Caco-2 (cell line): ENCODE measurements at regions of chrX and their contacts with region 1.

Region 1: DNA sequence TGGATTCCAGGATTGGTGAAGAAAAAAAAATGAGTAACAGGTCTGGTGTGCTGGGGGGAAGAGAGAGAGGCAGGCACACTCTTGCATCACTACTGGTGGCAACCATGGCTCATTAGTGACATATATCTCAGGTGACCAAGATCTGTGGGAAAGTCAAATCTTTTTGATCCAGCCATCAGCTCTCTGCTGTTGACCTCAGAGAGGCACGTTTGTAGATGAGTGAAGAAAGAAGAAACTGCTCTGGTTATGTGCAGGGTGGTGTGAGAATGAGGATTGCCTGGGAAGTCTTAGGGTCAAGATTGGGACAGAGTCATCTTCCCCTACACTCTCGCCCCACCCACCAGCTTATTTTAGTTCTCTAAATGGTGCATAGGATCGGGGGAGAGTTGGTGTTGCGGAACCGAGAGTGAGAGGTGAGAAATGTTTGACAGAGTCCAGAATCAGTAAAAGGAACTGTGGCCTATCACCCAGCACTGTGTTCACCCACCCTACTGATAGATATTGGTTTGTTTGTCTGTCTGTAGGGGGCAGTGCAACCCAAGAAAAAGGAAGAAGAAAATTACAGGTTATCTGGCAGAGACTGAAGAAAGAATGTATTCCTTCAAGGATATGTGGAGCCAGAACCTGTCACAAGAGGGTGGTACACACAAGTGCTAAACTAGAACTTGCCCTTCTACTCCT is 21.9 kb downstream of the ARMCX6 start:
- DNase-seq: peak in 1 of 2 experiments; percentile 63
- H3K4me3 ChIP-seq: no peak overlapping the region
- H3K4me3 Mint-ChIP-seq: no peak overlapping the region
- H3K27ac Mint-ChIP-seq: no peak overlapping the region
- H3K4me1 ChIP-seq: no peaks in the 10 kb centered on the region
- H3K4me1 Mint-ChIP-seq: no peaks in the 10 kb centered on the region
- H3K27me3 ChIP-seq: no peaks in the 10 kb centered on the region; the same call in 1 of the 2 replicates
- H3K27me3 Mint-ChIP-seq: peaks cover 7% of the 10 kb centered on the region
- CTCF ChIP-seq: peak; percentile 47 to 56

Region 2: DNA sequence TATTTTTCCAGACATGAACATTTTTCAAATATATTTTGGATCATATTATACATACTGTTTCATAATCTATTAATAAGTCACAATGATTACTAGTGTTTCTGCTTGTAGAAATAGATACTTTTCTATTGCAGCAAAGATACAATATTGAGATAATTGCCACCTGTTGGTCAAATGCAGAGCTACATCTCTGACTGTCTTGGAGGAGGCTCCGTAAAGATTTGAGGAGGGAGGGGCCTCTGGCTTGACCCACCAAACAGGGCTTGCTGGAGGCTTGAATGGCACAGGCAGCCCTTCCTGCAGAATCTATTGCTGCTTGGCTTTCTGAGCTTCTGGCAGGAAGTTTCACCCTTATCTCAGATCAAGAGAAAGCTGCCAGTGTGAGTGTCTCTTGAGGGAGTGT is 163.1 kb after region 1 on chrX:
- CTCF ChIA-PET with region 1: no interaction called
- POLR2A ChIA-PET with region 1: no interaction called
- intact Hi-C with region 1: loop called (anchors 5 kb)
- DNase-seq: peak; percentile 38 to 42
- H3K4me3 ChIP-seq: no peak overlapping the region
- H3K4me3 Mint-ChIP-seq: no peak overlapping the region
- H3K27ac Mint-ChIP-seq: no peak overlapping the region
- H3K4me1 ChIP-seq: no peaks in the 10 kb centered on the region
- H3K4me1 Mint-ChIP-seq: no peaks in the 10 kb centered on the region
- H3K27me3 ChIP-seq: no peaks in the 10 kb centered on the region
- H3K27me3 Mint-ChIP-seq: peaks cover 4% of the 10 kb centered on the region
- CTCF ChIP-seq: peak; percentile 7 to 36

Region 3: DNA sequence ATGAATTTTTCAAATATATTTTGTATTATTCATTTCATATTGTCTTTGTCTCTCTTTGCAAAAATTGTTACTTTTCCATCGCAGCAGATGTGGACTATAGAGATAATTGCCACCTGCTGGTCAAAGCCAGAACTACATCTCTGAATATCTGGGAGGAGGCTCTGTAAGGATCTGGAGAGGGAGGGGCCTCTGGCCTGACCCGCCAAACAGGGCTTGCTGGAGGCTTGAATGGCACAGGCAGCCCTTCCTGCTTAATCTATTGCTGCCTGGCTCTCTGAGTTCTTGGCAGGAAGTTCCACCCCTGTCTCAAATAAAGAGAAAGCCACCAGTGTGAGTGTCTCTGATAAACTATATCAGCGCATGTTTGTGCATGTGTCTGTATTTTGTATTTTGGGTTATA is 203.5 kb after region 1 on chrX:
- CTCF ChIA-PET with region 1: no interaction called
- POLR2A ChIA-PET with region 1: no interaction called
- intact Hi-C with region 1: loop called (anchors 5 kb)
- DNase-seq: peak; percentile 77 to 79
- H3K4me3 ChIP-seq: no peak overlapping the region
- H3K4me3 Mint-ChIP-seq: peak overlapping the region; percentile 16
- H3K27ac Mint-ChIP-seq: no peak overlapping the region
- H3K4me1 ChIP-seq: no peaks in the 10 kb centered on the region
- H3K4me1 Mint-ChIP-seq: no peaks in the 10 kb centered on the region
- H3K27me3 ChIP-seq: no peaks in the 10 kb centered on the region
- H3K27me3 Mint-ChIP-seq: no peaks in the 10 kb centered on the region
- CTCF ChIP-seq: peak; percentile 41 to 45